Sigmoid colon (tissue), 7 donors: ENCODE measurements at regions of chr17 and their contacts with region 1.

Region 1: DNA sequence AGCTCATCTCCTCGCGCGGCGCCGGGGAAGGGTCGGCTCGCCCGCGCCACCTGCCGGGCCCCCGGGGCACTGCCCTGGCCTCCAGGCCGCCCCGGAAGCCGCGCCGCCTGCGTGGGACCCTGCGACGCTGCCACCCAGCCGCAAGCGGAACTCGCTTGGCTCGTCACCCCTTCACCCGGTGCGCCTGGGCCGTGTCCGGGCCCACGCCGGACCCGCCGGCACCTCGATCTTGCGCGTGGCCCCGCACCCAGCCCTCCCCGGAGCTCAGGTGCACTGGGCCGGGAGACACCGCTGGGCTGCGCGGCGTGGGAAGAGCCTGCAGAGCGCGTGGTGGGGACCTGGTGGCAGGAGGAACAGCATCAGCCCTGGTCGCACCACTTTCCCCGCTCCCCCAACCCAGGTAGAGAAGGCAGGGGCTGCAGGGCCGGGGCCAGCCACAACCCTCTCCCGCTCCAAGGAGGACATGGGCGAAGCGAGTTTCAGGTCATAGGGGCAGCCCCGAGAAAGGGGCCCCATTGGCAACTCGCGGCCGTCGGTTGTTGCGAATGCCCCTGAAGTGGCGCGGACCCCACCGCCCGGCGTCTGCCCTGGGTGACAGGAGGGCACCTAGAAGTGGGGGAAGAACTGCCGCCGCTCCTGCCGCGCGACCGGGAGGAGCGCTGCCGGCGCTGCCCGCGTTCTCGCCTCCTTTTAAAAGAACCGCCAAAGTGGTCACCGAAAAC is 363 bp upstream of the MIF4GD start:
- DNase-seq: peak; percentile 86
- H3K4me3 ChIP-seq: peak overlapping the region; percentile 47 to 89 (median 82)
- H3K27ac ChIP-seq: peak overlapping the region; percentile 94 to 99 (median 96)
- H3K4me1 ChIP-seq: peaks cover 0 to 32% (median 25%) of the 10 kb centered on the region in 4 donors
- H3K27me3 ChIP-seq: no peaks in the 10 kb centered on the region
- CTCF ChIP-seq: peak; percentile 23 to 74 (median 34)
- EP300 ChIP-seq: no peak
- POLR2A ChIP-seq: no peak

Region 2: DNA sequence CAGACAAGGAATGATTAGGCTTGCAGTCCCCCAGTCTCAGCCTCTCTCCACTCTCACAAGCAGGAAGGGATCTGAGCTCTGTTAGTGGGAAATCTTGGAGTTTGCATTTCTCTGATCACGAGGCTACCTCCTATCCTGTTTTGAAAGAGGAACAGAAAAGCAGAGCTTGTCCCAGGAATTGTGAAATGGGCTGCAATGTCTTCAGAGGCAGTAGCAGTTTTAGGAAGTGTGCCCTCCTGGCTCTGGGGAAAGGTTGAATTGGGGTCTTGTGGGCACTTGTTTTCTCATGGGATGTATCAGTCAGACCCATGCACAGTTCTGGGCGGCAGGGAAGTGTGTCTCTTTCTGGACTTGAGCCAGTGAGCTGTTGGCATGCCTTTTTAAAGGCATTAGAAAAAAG is 43.1 kb before region 1 on chr17:
- intact Hi-C with region 1: no loop called
- DNase-seq: no peak
- H3K4me3 ChIP-seq: no peak overlapping the region
- H3K27ac ChIP-seq: peak overlapping the region in 3 of 4 donors; percentile 1 to 34 (median 8)
- H3K4me1 ChIP-seq: no peaks in the 10 kb centered on the region
- H3K27me3 ChIP-seq: no peaks in the 10 kb centered on the region
- CTCF ChIP-seq: no peak
- EP300 ChIP-seq: no peak
- POLR2A ChIP-seq: no peak

Region 3: GRCh38 chr17:75289115-75289831 is 17.9 kb after region 1 on chr17 and contains the start of gene SLC25A19:
- intact Hi-C with region 1: loop called (anchors 2 kb)
- DNase-seq: peak; percentile 100
- H3K4me3 ChIP-seq: peak within 1 kb of the TSS; percentile 65 to 78 (median 74)
- H3K27ac ChIP-seq: peak within 1 kb of the TSS; percentile 90 to 97 (median 94)
- H3K4me1 ChIP-seq: peaks cover 0 to 15% (median 5%) of the 10 kb centered on the region in 4 donors
- H3K27me3 ChIP-seq: no peaks in the 10 kb centered on the region
- CTCF ChIP-seq: no peak
- EP300 ChIP-seq: no peak
- POLR2A ChIP-seq: peak; percentile 63 to 78
- total RNA-seq, gene SLC25A19: 8.7 to 19.6 (median 14.7) TPM

Region 4: GRCh38 chr17:75405365-75406221 is 134.2 kb after region 1 on chr17 and contains the start of gene GRB2:
- intact Hi-C with region 1: loop called (anchors 5 kb)
- DNase-seq: peak; percentile 99
- H3K4me3 ChIP-seq: peak within 1 kb of the TSS; percentile 92 to 100 (median 96)
- H3K27ac ChIP-seq: peak within 1 kb of the TSS; percentile 92 to 97 (median 97)
- H3K4me1 ChIP-seq: peaks cover 0 to 38% (median 22%) of the 10 kb centered on the region in 4 donors
- H3K27me3 ChIP-seq: no peaks in the 10 kb centered on the region
- CTCF ChIP-seq: no peak
- EP300 ChIP-seq: peak in 1 of 4 donors; percentile 57
- POLR2A ChIP-seq: peak; percentile 75 to 78
- total RNA-seq, gene GRB2: 75.3 to 103 (median 84.4) TPM